ENCODE measurements at regions of chr4 and their contacts with region 1.

Region 1: DNA sequence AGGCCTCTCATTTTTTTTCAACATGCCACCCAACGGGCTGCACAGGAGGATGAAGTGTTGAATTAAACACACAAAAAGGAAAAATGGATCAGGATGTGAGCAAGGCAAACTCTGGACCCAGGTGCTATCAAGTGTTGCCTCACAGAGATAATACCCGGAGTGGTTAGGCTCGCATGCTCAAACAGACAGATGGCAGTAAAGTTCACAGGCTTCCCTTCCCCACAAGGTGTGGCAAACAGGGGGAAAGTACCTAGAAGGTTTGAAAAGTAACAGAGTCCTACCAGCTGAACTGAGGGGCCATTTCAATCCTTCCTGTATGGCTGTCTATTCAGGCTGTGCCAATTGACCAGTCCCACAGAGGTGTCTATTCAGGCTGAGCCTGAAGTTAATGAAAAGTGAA is 123.9 kb upstream of the GC start:
- DNase-seq: no peak
- ATAC-seq: no peak
- H3K4me3 ChIP-seq: no peak overlapping the region
- H3K27ac ChIP-seq: no peak overlapping the region
- H3K4me1 ChIP-seq: no peaks in the 10 kb centered on the region
- H3K27me3 ChIP-seq: no peaks in the 10 kb centered on the region
- CTCF ChIP-seq: no peak

Region 2: DNA sequence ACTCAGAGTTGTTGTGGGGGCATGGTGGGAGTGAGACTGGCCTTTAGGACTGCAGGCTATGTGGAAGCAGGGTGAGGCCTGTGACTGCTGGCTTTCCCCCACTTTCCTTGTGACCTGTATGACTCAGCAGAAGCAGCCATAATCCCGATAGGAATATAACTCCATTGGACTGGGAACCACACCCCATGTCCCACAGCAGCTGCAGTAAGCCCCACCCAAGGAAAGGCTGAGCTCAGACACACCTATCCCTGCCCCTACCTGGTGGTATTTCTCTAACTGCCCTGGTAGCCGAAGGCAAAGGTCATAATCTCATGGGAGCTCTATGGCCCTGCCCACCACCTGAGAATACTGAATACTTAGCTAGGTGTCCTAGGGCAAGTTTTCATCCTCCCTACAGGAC is 293.2 kb before region 1 on chr4:
- intact Hi-C with region 1: loop called in 1 of 2 experiments (anchors 10 kb)
- DNase-seq: no peak
- ATAC-seq: no peak
- H3K4me3 ChIP-seq: no peak overlapping the region
- H3K27ac ChIP-seq: no peak overlapping the region
- H3K4me1 ChIP-seq: no peaks in the 10 kb centered on the region
- H3K27me3 ChIP-seq: no peaks in the 10 kb centered on the region
- CTCF ChIP-seq: no peak

Region 3: DNA sequence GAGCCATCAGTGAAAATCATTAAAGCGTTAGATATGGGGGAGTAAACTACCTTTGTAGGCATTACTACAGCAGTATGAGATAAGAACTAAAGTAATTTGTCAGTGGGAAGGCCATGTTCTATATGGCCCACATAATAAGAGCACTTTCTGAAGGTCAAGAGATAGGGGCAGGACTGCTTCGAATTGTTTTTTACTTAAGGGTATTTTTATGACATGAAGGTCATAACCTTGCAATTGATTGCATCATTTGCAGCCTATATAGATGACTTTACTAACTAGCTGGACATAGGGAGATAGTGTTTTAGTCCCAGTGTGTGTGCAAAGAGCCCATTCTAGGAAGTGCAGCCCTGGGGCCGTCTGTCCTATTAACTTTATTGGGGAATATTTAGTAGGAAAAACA is 100.3 kb before region 1 on chr4:
- intact Hi-C with region 1: no loop called
- DNase-seq: no peak
- ATAC-seq: no peak
- H3K4me3 ChIP-seq: no peak overlapping the region
- H3K27ac ChIP-seq: no peak overlapping the region
- H3K4me1 ChIP-seq: no peaks in the 10 kb centered on the region
- H3K27me3 ChIP-seq: no peaks in the 10 kb centered on the region
- CTCF ChIP-seq: no peak

Region 4: DNA sequence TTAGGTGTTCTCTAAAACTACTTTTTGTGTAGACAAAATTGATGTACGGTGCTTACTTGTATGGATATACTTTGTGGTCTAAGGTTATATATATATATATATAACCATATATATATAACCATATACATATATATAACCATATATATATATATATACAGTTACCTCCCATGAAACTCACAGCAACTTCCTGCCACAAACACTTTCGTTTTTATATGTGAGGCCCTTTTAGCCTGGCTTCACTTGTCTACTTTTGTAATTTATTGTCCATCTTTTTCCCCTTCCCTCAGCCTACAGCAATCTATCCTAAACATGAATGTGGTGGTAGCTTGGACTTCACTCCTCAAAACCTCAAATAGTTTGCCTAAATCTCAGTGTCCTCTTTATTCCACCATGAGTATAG is 51.2 kb after region 1 on chr4:
- intact Hi-C with region 1: no loop called
- DNase-seq: no peak
- ATAC-seq: no peak
- H3K4me3 ChIP-seq: no peak overlapping the region
- H3K27ac ChIP-seq: no peak overlapping the region
- H3K4me1 ChIP-seq: no peaks in the 10 kb centered on the region
- H3K27me3 ChIP-seq: no peaks in the 10 kb centered on the region
- CTCF ChIP-seq: no peak